Activated CD4-positive, alpha-beta T cell treated with anti-CD3 and anti-CD28 coated beads for 36 hours (primary cell): ENCODE measurements at regions of chr17 and their contacts with region 1.

Region 1: GRCh38 chr17:6413065-6413464 is 21.9 kb downstream of the AIPL1 start:
- DNase-seq: no peak
- ATAC-seq: peak; percentile 55
- H3K4me3 Mint-ChIP-seq: no peak overlapping the region
- H3K27ac Mint-ChIP-seq: no peak overlapping the region
- H3K4me1 Mint-ChIP-seq: no peaks in the 10 kb centered on the region
- H3K27me3 Mint-ChIP-seq: peaks cover 7% of the 10 kb centered on the region

Region 2: DNA sequence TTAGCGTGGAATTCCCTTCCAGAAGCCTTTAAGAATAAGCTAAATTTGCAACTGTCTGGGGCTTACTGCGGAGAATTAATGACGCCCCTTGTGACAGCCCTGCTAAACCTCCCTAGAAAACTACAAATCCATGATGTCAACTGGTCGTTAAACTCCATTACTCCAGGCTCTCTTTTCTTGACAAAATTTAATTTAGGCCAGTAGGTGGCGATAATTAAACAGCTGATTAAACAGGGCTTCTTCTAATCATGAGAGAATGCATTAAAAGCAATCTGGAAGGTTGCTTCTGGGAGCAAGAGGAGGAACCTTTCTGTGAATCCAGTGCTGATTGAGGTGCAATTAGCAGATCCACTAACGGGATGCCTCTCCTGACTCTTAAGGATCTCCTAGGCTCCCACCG is 820.7 kb before region 1 on chr17:
- CTCF ChIA-PET with region 1: interaction called, 4 read pairs
- POLR2A ChIA-PET with region 1: interaction called, 7 read pairs
- intact Hi-C with region 1: loop called in 1 of 2 experiments (anchors 1 kb)
- DNase-seq: no peak
- ATAC-seq: no peak
- H3K4me3 Mint-ChIP-seq: no peak overlapping the region
- H3K27ac Mint-ChIP-seq: no peak overlapping the region
- H3K4me1 Mint-ChIP-seq: peaks cover under 1% of the 10 kb centered on the region
- H3K27me3 Mint-ChIP-seq: peaks cover 9% of the 10 kb centered on the region

Region 3: GRCh38 chr17:6069539-6070429 is 343.3 kb before region 1 on chr17 and contains the start of gene WSCD1:
- CTCF ChIA-PET with region 1: no interaction called
- POLR2A ChIA-PET with region 1: no interaction called
- intact Hi-C with region 1: loop called in 1 of 2 experiments (anchors 2 kb)
- DNase-seq: peak; percentile 28
- ATAC-seq: peak; percentile 12
- H3K4me3 Mint-ChIP-seq: peak within 1 kb of the TSS; percentile 61
- H3K27ac Mint-ChIP-seq: no peak within 1 kb of the TSS
- H3K4me1 Mint-ChIP-seq: peaks cover 10% of the 10 kb centered on the region
- H3K27me3 Mint-ChIP-seq: peaks cover 55% of the 10 kb centered on the region
- total RNA-seq, gene WSCD1: 0.04 to 0.16 TPM

Region 4: GRCh38 chr17:6286239-6286638 is 126.8 kb before region 1 on chr17:
- CTCF ChIA-PET with region 1: interaction called, 4 read pairs
- POLR2A ChIA-PET with region 1: no interaction called
- intact Hi-C with region 1: loop called in 1 of 2 experiments (anchors 5 kb)
- DNase-seq: peak; percentile 17
- ATAC-seq: no peak
- H3K4me3 Mint-ChIP-seq: no peak overlapping the region
- H3K27ac Mint-ChIP-seq: no peak overlapping the region
- H3K4me1 Mint-ChIP-seq: no peaks in the 10 kb centered on the region
- H3K27me3 Mint-ChIP-seq: peaks cover 8% of the 10 kb centered on the region